ENCODE measurements at regions of chr2 and their contacts with region 1.

Region 1: DNA sequence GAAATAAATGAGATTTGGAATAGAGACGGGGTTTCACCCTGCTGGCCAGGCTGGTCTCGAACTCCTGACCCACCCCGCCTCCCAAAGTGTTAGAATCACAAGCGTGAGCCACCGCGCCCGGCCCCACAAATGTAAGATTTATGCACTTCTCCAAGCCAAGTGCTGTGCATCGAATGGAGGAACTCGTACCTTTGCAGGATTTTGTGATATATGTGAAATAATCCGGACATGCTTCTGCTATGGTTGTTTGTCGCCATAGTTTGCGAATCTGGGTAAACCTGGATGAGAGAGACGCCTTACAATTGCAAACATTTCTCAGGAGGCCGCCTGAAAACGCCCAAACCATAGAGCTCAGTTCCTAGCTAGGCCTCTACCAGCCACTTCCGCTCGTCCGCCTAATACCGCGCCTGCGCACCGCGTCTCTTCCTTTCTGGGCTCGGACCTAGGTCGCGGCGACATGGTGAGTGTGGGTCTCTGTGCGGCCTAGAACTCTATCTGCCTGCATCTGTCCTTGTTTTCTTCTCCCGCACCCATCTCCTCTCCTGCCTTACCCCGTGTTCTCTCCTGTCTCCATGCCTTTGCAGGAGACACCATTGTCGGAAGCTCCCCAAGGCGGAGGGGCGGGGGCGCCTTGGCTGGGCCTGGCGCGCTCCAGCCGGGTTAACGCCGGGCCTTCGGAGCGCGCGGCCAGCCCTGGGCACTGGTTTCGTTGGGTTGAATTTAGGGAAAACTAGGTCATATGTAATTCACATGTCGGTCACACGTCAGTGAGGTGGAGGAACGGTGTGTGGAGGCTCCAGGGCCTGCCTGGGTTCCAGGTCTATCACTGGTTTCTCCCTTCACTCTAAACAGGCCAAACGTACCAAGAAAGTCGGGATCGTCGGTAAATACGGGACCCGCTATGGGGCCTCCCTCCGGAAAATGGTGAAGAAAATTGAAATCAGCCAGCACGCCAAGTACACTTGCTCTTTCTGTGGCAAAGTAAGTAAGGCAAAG is at the start of gene RPL37A:
- DNase-seq: peak; percentile 94
- ATAC-seq: peak; percentile 91
- H3K4me3 ChIP-seq: peak within 1 kb of the TSS; percentile 83
- H3K27ac ChIP-seq: peak within 1 kb of the TSS; percentile 29
- H3K4me1 ChIP-seq: peaks cover 37% of the 10 kb centered on the region
- H3K27me3 ChIP-seq: no peaks in the 10 kb centered on the region
- CTCF ChIP-seq: no peak
- total RNA-seq, gene RPL37A: 1,848 and 2,472 TPM in 2 replicates

Region 2: DNA sequence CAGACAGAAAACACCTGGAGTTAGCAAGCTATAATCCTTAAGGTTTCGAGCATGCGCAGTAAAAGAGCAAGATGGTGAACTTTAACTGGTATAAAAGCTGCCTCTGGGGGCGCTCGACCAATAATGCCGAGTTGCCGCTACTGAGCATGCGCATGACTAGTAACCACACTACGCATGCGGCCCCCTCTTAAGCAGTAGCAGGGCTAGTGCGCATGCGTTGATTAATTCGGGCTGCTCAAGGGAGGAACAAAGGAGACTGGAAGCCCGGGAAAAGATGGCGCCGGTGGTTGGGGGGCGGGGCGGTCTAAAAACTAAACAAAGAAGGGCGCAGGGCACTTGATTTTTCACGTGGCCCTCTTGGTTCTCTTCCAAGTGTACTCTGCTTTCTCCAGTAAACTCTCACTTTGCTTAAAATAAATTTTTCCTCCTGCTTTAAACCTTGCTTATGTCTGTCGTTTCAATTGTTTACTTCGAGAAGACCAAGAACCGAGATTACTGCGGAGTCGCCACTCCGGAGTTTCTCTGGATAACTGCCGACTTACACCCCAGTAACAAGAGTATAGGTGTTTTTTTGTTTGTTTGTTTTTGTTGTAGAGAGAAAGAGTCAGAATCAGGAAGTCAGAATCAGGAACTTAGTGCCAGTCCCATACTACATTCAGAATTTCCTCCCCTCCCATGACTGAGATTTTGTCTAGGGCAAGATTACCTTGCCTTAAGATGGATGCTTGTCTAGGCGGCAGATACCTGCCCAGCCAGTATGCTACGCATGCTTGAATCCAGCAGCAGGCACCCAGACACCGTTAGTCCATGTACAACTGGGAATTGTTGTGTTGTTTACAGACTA is 383.8 kb before region 1 on chr2:
- CTCF ChIA-PET with region 1: no interaction called
- POLR2A ChIA-PET with region 1: no interaction called
- intact Hi-C with region 1: loop called (anchors 10 kb)
- DNase-seq: peak; percentile 99
- ATAC-seq: peak; percentile 94
- H3K4me3 ChIP-seq: peak overlapping the region; percentile 72
- H3K27ac ChIP-seq: peak overlapping the region; percentile 76
- H3K4me1 ChIP-seq: peaks cover 39% of the 10 kb centered on the region
- H3K27me3 ChIP-seq: no peaks in the 10 kb centered on the region
- CTCF ChIP-seq: peak; percentile 90

Region 3: GRCh38 chr2:216215658-216216390 is 282.9 kb before region 1 on chr2:
- CTCF ChIA-PET with region 1: interaction called, 3 read pairs
- POLR2A ChIA-PET with region 1: interaction called, 3 read pairs
- intact Hi-C with region 1: loop called (anchors 5 kb)
- DNase-seq: peak; percentile 32
- ATAC-seq: no peak
- H3K4me3 ChIP-seq: no peak overlapping the region
- H3K27ac ChIP-seq: peak overlapping the region; percentile 82
- H3K4me1 ChIP-seq: peaks cover 43% of the 10 kb centered on the region
- H3K27me3 ChIP-seq: no peaks in the 10 kb centered on the region
- CTCF ChIP-seq: peak; percentile 51

Region 4: GRCh38 chr2:216315789-216316603 is 182.7 kb before region 1 on chr2:
- CTCF ChIA-PET with region 1: no interaction called
- POLR2A ChIA-PET with region 1: no interaction called
- intact Hi-C with region 1: loop called (anchors 10 kb)
- DNase-seq: peak; percentile 81
- ATAC-seq: peak; percentile 89
- H3K4me3 ChIP-seq: peak overlapping the region; percentile 58
- H3K27ac ChIP-seq: peak overlapping the region; percentile 91
- H3K4me1 ChIP-seq: peaks cover 25% of the 10 kb centered on the region
- H3K27me3 ChIP-seq: no peaks in the 10 kb centered on the region
- CTCF ChIP-seq: no peak

Region 5: GRCh38 chr2:216345846-216346245 is 152.9 kb before region 1 on chr2:
- CTCF ChIA-PET with region 1: no interaction called
- POLR2A ChIA-PET with region 1: interaction called, 10 read pairs
- intact Hi-C with region 1: no loop called
- DNase-seq: no peak
- ATAC-seq: no peak
- H3K4me3 ChIP-seq: no peak overlapping the region
- H3K27ac ChIP-seq: no peak overlapping the region
- H3K4me1 ChIP-seq: peaks cover 18% of the 10 kb centered on the region
- H3K27me3 ChIP-seq: no peaks in the 10 kb centered on the region
- CTCF ChIP-seq: no peak

Region 6: GRCh38 chr2:216412022-216412999 is 86.4 kb before region 1 on chr2 and contains the start of gene SMARCAL1:
- CTCF ChIA-PET with region 1: no interaction called
- POLR2A ChIA-PET with region 1: interaction called, 6 read pairs
- intact Hi-C with region 1: loop called (anchors 1 kb)
- DNase-seq: peak; percentile 98
- ATAC-seq: peak; percentile 92
- H3K4me3 ChIP-seq: peak within 1 kb of the TSS; percentile 89
- H3K27ac ChIP-seq: peak within 1 kb of the TSS; percentile 41
- H3K4me1 ChIP-seq: no peaks in the 10 kb centered on the region; the same call in 1 of the 2 replicates
- H3K27me3 ChIP-seq: no peaks in the 10 kb centered on the region
- CTCF ChIP-seq: no peak
- total RNA-seq, gene SMARCAL1: 8.3 and 17.2 TPM in 2 replicates